ENCODE measurements at regions of chr1 and their contacts with region 1.

Region 1: GRCh38 chr1:235328357-235329138 is at the start of gene GGPS1:
- DNase-seq: peak; percentile 99
- H3K4me3 Mint-ChIP-seq: no peak within 1 kb of the TSS
- H3K27ac Mint-ChIP-seq: no peak within 1 kb of the TSS
- H3K4me1 Mint-ChIP-seq: peaks cover 41% of the 10 kb centered on the region
- H3K27me3 Mint-ChIP-seq: no peaks in the 10 kb centered on the region
- total RNA-seq, gene GGPS1: 28.2 to 34.3 TPM

Region 2: DNA sequence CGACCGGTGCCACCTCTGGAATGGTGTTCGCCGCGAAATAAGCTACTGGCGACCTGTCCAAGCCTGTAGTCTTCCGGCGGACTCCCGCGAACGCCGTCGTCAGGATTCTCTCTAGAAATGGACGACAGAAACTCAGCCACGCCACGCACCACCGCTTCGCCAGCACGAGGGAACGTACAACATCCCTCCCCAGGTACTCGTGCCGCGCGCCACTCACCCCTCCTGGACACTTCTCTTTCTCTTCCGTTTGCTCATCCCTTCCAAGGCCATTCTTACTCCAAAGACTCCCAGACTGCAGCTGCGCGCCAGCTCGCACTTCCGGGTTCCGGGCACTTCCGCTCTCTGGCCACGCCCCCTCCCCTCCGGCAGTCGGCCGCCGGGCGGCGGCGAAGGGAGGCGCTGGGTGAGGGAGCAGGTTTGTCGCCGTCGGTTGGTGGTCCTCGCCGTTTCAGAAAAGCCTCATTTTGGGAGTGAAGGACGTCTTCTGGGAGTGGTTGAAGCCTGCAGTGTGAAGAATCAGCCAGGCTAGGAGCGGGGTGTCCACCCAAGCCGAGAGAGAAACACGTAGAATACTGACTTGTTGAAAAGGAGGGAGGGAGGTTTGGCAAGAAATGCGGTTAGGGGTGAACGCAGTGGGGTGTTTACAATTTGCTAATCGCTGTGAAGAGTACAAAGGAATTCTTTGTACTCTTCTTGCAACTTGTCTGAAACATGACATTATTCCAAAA is 167.4 kb before region 1 on chr1 and contains the start of gene RBM34:
- CTCF ChIA-PET with region 1: interaction called, 4 read pairs
- POLR2A ChIA-PET with region 1: interaction called, 25 read pairs
- DNase-seq: peak; percentile 93
- H3K4me3 Mint-ChIP-seq: peak within 1 kb of the TSS; percentile 98
- H3K27ac Mint-ChIP-seq: peak within 1 kb of the TSS; percentile 95
- H3K4me1 Mint-ChIP-seq: peaks cover 26% of the 10 kb centered on the region
- H3K27me3 Mint-ChIP-seq: no peaks in the 10 kb centered on the region
- total RNA-seq, gene RBM34: 95.7 to 102 TPM

Region 3: DNA sequence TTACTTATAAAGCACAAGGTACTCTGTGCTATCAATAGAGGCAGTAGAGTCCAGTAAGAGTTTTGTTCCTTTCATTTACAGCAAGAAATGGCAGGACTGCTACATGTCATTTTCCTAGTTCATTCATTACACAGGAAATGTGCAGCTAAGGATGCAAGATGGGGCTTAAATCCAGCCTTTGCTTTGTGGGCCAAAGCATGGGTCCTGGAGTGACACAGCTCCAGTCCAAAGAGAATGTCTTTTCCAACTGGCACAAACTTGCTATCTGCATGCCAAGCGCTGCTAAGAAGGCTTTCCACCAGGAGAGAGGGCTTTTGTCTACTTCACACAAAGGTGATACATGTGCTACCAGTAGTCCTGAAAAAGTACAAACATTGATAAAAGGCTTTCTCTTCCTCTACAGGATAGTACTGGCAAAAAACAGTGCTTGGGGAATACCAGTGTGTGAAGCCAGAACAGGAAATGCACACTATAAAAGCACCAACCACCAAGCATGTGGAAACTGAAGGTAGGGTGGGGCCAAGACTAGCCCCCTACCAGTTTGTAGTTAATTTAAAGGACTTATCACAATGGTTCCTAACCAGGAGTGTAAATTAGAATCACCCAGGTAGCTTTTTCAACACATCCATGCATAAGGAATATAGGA is 69.3 kb before region 1 on chr1:
- CTCF ChIA-PET with region 1: interaction called, 3 read pairs
- POLR2A ChIA-PET with region 1: interaction called, 14 read pairs
- DNase-seq: no peak
- H3K4me3 Mint-ChIP-seq: no peak overlapping the region
- H3K27ac Mint-ChIP-seq: peak overlapping the region; percentile 26
- H3K4me1 Mint-ChIP-seq: peaks cover 29% of the 10 kb centered on the region
- H3K27me3 Mint-ChIP-seq: no peaks in the 10 kb centered on the region

Region 4: GRCh38 chr1:235304549-235305451 is 23.7 kb before region 1 on chr1:
- CTCF ChIA-PET with region 1: interaction called, 8 read pairs
- POLR2A ChIA-PET with region 1: interaction called, 10 read pairs
- DNase-seq: peak; percentile 27
- H3K4me3 Mint-ChIP-seq: peak overlapping the region; percentile 22
- H3K27ac Mint-ChIP-seq: peak overlapping the region; percentile 70
- H3K4me1 Mint-ChIP-seq: peaks cover 34% of the 10 kb centered on the region
- H3K27me3 Mint-ChIP-seq: no peaks in the 10 kb centered on the region

Region 5: GRCh38 chr1:235313931-235314678 is 14.4 kb before region 1 on chr1:
- CTCF ChIA-PET with region 1: interaction called, 9 read pairs
- POLR2A ChIA-PET with region 1: interaction called, 12 read pairs
- DNase-seq: no peak
- H3K4me3 Mint-ChIP-seq: peak overlapping the region; percentile 5
- H3K27ac Mint-ChIP-seq: peak overlapping the region; percentile 54
- H3K4me1 Mint-ChIP-seq: peaks cover 62% of the 10 kb centered on the region
- H3K27me3 Mint-ChIP-seq: no peaks in the 10 kb centered on the region

Region 6: GRCh38 chr1:235504496-235505222 is 176.1 kb after region 1 on chr1:
- CTCF ChIA-PET with region 1: interaction called, 10 read pairs
- POLR2A ChIA-PET with region 1: no interaction called
- DNase-seq: peak; percentile 99
- H3K4me3 Mint-ChIP-seq: peak overlapping the region; percentile 94
- H3K27ac Mint-ChIP-seq: peak overlapping the region; percentile 98
- H3K4me1 Mint-ChIP-seq: peaks cover 26% of the 10 kb centered on the region
- H3K27me3 Mint-ChIP-seq: peaks cover 5% of the 10 kb centered on the region

Measured in activated CD4-positive, alpha-beta memory T cell treated with anti-CD3 and anti-CD28 coated beads, Interleukin-2, amount 10 ng/mL, durations not matched to agents 7 days and 5 days (primary cell).